HEK293 (cell line): ENCODE measurements at regions of chr19 and their contacts with region 1.

Region 1: GRCh38 chr19:40806488-40807468 is 7.8 kb downstream of the EGLN2 start:
- H3K4me3 ChIP-seq: no peak overlapping the region
- H3K27ac ChIP-seq: peak overlapping the region; percentile 67
- H3K4me1 ChIP-seq: peaks cover 65% of the 10 kb centered on the region
- CTCF ChIP-seq: peak; percentile 97

Region 2: GRCh38 chr19:40650749-40651305 is 156.0 kb before region 1 on chr19:
- CTCF ChIA-PET with region 1: interaction called, 11 read pairs
- POLR2A ChIA-PET with region 1: no interaction called
- H3K4me3 ChIP-seq: no peak overlapping the region
- H3K27ac ChIP-seq: no peak overlapping the region
- H3K4me1 ChIP-seq: peaks cover 11% of the 10 kb centered on the region
- CTCF ChIP-seq: no peak

Region 3: DNA sequence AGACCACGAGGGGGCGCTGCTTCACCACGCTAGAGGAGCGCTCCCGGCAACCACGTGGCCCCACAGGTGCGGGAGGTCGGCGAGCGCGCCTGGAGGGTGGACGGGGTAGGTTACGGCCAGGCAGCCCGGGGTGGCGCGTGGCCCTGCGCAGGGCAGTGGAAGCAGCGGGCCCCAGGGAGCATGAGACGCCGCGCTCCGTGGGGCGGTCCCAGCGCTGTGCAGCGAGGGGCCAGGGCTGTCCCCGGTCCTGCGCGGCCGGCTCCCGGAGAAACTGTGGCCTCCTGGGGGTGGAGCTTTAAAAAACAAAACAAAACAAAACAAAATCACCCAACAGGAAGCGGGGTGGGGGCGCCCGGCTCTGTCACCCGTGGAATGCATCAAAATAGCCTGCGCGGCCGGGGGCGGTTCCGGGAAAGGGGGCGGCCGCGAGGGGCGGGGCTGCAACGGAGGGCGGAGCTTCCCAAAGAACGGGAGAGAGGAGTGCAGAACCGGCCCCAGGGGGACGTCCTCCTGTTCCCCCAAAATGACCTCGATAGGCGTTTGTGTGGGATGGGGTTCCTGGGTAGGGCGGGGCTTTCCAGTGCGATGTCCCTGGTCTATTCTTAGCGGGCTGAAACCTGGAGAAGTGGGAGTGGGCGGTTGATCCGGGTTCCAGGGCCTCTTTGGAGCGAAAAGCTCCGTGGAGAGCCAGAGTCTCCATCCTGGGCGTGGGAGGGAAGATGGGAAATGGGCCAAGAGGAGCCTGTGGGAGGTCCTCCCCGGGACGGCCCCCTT is 143.7 kb before region 1 on chr19:
- CTCF ChIA-PET with region 1: interaction called, 74 read pairs
- POLR2A ChIA-PET with region 1: interaction called, 14 read pairs
- H3K4me3 ChIP-seq: peak overlapping the region; percentile 56
- H3K27ac ChIP-seq: peak overlapping the region; percentile 89; the same call in 1 of the 2 replicates
- H3K4me1 ChIP-seq: peaks cover 13% of the 10 kb centered on the region
- CTCF ChIP-seq: peak; percentile 100

Region 4: DNA sequence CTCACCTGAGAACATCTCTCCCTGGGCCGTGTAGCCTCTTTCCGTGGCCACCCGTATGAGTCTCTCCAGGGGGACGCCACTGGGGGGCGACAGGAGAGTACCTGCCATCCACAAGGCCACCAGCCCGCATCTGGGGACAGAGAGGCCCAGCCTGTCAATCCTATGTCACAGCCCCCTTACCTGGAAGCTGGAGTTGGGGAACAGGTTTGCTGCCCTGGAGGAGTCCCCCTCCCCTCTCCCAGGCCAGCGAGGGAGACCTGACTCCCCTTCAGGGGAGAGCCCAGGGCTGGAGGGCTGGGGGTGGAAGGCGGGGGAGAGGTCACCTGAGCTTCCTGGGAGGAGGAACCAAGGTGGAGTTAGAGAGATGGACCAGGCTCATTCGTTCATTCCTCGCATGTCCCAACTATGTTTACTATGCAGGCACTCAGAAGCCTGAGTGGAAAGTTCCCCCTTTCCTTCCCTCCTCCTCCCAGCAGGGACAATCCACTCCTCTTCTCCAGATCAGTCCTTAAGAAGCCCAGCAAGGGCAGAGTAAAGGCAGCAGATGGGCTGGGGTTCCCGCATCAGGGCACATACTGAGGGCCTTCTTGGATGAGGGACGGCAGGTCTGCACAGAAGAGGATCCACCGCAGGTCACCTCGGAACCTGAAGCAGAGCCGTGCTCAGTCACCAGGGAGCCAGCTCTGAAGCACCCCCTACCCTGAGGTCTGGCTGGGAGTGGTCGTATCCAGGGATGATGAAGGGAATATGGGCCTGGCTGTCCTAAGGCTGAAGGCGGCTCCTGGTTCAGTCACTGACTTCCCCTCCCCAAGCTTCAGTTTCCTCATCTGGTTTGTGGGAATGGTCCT is 62.0 kb before region 1 on chr19:
- CTCF ChIA-PET with region 1: interaction called, 38 read pairs
- POLR2A ChIA-PET with region 1: interaction called, 56 read pairs
- H3K4me3 ChIP-seq: no peak overlapping the region
- H3K27ac ChIP-seq: peak overlapping the region; percentile 49; the same call in 1 of the 2 replicates
- H3K4me1 ChIP-seq: peaks cover 11% of the 10 kb centered on the region
- CTCF ChIP-seq: peak; percentile 68

Region 5: DNA sequence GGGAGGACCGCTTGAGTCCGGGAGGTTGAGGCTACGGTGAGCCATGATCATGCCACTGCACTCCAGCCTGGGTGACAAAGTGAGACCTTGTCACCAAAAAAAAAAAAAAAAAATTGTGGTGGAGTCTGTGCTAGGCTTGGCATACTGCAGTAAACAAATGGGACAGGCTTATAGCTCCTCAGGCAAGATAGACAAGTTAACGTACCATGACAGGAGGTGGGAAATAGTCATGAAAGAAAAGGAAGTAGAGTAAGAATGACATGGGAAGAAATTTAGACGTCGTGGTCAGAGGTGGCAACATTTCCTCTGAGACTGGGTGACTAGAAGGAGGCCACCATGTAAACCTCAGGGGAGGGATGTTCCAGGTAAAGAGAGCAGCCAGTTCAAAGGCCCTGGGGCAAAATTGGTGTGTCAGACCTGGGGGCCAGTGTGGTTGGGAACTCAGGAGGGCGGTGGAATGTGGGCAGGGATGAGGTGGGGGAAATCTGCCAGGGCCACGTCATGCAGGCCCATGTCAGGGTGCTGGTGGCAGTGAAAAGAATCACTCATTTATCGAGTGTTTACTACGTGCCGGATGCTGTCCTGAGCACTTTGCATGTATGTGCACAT is 50.2 kb before region 1 on chr19:
- CTCF ChIA-PET with region 1: interaction called, 22 read pairs
- POLR2A ChIA-PET with region 1: interaction called, 5 read pairs
- H3K4me3 ChIP-seq: no peak overlapping the region
- H3K27ac ChIP-seq: no peak overlapping the region; the same call in 1 of the 2 replicates
- H3K4me1 ChIP-seq: peaks cover 28% of the 10 kb centered on the region
- CTCF ChIP-seq: no peak

Region 6: GRCh38 chr19:40822161-40822560 is 15.4 kb after region 1 on chr19:
- CTCF ChIA-PET with region 1: interaction called, 77 read pairs
- POLR2A ChIA-PET with region 1: no interaction called
- H3K4me3 ChIP-seq: no peak overlapping the region
- H3K27ac ChIP-seq: peak overlapping the region; percentile 54; the same call in 1 of the 2 replicates
- H3K4me1 ChIP-seq: peaks cover 20% of the 10 kb centered on the region
- CTCF ChIP-seq: no peak

Region 7: DNA sequence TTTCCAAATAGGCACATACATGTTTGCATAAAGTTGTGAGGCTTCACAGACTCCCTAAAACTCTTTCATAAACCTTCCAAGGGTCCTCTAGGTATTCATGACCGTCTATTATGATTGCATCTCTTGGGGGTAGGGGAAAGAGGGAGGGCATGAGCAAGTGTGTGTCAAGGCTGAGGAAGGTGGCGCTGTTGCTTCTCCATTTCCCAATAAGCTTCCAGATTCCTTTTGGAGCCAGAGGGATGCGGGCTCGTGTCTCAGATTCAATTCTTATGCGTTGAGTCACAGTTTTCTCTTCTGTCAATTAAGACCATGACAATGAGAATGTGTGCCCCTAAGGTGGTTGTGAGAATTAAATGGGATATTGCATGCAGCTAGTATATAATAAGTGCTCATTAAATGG is 126.3 kb after region 1 on chr19:
- CTCF ChIA-PET with region 1: interaction called, 15 read pairs
- POLR2A ChIA-PET with region 1: no interaction called
- H3K4me3 ChIP-seq: no peak overlapping the region
- H3K27ac ChIP-seq: no peak overlapping the region
- H3K4me1 ChIP-seq: 0 out of 2 replicates have a peak, but pooled peaks cover 3% of the 10 kb centered on the region
- CTCF ChIP-seq: peak; percentile 21; the same call in 1 of the 2 replicates